Right ventricle myocardium superior (tissue), 1 donor: ENCODE measurements at regions of chr6 and their contacts with region 1.

Region 1: DNA sequence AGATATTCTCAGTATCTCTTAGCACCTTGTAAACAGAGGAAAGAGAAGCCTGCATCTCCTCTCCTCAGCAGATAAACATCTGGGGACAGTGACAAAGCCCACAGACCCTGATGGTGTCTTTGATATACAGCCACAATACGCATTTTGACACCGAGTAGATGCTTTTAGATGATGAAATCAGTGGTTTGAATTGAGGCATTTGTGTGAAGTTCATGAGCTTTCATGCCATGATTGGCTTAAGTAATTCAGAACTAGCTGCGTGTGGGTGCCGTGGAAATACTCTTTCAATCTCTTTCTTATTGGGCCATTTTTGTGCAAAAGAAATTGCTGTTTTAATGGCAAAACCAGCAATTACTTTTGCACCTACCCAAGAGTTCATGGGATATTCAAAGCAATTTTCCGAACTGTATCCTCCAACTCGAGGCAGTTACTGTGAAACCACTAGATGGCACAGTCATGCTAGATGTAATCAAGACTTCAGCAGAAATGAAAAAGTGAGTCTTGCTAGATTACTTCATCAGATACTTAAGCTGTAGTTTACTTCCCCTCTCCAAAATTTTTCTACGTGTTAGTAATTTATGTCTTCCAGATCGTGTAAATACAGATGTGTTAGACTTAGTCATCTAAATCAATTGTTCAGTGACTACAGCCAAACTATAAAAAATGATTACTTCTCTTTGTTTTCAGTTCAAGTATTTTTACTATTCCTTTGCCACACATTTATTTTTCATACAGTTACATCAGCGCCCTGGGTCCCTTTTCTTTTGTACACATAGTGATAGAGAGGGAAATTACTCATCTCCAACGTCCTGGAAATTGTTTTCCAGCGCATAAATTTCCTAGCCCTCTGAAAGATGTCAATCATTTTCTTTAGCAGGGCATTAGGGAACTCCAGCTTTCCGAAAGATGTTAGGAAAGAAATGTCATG is 49.4 kb downstream of the IYD start:
- DNase-seq: no peak
- ATAC-seq: peak; percentile 92

Region 2: DNA sequence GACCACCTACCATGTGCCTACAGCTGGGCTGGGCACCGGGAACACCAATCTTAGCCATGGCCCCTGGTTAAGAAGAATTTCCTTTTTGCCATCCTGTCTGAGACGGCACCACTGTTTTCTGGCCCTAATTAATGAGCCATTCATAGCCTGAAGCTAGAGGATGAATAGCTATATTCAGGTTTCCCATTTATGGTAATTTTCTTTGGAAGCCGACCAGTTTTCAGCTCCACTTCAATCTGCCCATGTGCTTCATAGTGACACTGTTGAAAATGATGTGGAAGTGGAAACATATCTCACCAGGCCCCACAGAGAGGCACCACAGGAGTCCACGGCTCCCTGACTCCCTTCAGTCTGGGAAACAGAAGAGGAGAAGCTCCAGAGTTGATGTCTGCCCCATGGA is 326.7 kb before region 1 on chr6:
- intact Hi-C with region 1: no loop called
- DNase-seq: no peak
- ATAC-seq: no peak

Region 3: DNA sequence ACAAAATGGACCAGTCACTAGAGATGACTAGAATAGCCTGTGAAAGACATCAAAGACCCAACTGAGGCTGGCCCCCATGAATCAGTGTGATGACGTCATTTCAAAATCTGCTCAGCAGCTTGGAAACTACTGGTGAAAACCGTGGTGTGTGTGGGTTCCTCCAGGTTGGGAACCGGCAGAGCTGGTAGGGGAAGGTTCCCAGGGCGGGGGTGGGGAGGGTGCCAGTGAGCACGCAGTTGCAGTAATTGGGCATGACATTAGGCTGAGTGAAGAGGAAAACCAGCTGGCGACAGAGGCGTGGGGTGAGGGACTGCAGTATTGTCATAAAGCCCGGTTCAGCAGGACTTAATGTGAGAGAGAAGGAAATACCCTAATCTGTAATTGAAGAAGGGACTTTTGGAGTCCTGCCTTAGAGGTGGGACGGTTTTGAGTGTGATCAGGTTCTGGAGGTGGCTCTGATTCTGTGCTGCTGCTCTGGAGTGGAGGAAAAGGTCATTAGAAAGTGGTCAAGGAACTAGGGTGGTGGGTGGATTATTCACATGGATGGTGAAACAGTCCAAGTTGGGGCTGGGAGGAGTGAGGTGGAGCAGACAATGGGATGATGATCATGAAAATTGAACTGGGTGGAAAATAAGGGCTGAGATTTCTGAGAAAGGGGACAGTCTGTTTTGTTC is 395.3 kb after region 1 on chr6:
- intact Hi-C with region 1: loop called (anchors 2 kb)
- DNase-seq: no peak
- ATAC-seq: peak; percentile 34

Region 4: DNA sequence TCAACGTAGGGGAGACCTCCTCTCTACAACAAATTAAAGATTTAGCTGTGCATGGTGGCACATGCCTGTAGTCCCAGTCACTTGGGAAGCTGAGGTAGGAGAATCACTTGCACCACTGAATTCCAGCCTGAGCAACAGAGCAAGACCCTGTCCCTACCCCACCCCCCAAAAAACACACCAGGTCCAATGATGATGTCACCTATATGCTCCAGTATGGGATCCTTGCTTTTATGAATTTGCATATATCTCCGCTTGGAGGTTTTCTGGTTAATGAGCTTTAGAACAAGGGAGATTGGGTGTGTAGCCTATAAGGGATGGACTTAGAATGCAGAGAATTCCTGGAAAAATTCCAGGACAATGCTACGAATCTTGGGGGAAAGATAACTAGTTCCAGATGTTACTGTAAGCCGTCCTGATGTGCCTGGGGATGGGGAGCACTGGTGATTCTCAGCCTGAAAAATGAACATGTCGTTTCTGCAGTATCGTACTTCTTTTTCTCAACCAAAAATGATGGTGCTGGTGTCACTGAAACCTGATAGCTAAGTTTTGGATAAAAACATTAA is 912.1 kb after region 1 on chr6:
- intact Hi-C with region 1: loop called (anchors 10 kb)
- DNase-seq: no peak
- ATAC-seq: no peak